PC-9 (cell line): ENCODE measurements at regions of chr19 and their contacts with region 1.

Region 1: DNA sequence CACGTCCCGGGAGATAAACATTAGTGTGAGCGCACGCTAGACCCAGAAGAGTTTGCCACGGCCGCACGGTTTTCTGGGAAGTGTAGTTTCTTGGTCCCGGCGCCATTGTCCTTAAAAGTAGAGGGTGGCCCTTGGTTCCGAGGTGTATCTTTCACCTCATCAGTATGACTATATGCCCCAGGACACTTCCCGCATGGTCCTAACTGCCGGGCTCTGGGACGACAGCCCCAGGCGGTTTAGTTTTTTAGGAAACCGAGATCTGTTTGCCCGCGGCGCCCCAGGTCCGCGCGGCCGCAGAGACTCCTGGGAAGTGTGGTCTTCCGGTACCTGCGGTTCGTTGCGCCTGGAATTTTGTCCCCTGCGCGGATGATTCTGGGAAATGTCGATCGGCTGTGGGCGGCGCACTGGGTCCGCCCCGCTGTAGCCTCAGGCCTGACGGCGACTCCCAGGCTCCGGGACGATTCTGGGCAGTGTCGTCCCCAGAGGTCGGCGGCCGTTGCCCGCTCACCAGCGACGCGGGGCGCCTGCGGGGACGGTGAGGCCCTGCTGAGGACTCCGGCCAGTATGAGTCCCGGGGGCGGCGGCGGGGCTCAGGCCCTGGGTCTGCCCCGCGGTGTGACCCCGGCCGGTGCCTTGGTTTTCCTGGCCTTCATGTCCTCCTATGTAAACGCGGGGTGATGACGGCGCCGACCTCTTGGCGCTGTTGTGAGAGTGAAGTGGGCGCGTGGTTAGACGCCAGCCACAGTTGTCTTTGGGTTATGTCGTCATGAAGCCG is at the start of gene ZNF181:
- DNase-seq: peak; percentile 80 to 88
- H3K4me3 ChIP-seq: peak within 1 kb of the TSS; percentile 93
- H3K27ac ChIP-seq: peak within 1 kb of the TSS; percentile 77
- H3K4me1 ChIP-seq: peaks cover 8% of the 10 kb centered on the region
- H3K27me3 ChIP-seq: no peaks in the 10 kb centered on the region
- CTCF ChIP-seq: no peak
- total RNA-seq, gene ZNF181: 2.6 and 4.7 TPM in 2 replicates

Region 2: DNA sequence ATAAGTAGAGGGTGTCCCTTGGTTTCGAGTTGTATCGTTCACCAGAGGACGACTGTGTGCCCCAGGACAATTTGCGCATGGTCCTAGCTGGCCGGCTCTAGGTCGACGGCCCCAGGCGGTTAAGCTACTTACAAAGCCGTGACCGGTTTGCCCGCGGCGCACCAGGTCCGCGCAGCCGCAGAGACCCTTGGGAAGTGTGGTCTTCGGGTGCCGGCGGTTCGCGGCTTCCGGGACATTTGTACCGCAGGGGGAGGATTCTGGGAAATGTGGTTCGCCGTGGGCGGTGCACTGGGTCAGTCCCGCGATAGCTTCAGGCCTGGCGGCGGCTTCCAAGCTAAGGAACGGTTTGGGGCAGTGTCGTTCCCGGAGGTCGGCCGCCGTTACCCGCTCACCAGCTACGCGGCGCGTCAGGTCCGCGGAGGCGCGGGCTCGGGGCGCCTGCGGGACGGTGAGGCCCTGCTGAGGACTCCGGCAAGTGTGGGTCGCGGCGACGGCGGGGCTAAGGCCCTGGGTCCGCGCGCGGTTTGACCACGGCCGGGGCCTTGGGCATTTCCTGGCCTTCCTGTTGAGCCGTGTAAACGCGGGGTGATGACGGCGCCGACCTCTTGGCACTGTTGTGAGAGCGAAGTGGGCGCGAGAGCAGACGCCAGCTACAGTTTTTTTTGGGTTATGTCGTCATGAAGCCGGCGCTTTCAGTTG is 56.5 kb before region 1 on chr19 and contains the start of gene ZNF302:
- CTCF ChIA-PET with region 1: no interaction called
- POLR2A ChIA-PET with region 1: interaction called, 3 read pairs
- intact Hi-C with region 1: loop called (anchors 1 kb)
- DNase-seq: peak; percentile 87 to 95
- H3K4me3 ChIP-seq: peak within 1 kb of the TSS; percentile 93
- H3K27ac ChIP-seq: peak within 1 kb of the TSS; percentile 80
- H3K4me1 ChIP-seq: peaks cover 16% of the 10 kb centered on the region
- H3K27me3 ChIP-seq: no peaks in the 10 kb centered on the region
- CTCF ChIP-seq: no peak
- total RNA-seq, gene ZNF302: 17.5 and 19.5 TPM in 2 replicates

Region 3: DNA sequence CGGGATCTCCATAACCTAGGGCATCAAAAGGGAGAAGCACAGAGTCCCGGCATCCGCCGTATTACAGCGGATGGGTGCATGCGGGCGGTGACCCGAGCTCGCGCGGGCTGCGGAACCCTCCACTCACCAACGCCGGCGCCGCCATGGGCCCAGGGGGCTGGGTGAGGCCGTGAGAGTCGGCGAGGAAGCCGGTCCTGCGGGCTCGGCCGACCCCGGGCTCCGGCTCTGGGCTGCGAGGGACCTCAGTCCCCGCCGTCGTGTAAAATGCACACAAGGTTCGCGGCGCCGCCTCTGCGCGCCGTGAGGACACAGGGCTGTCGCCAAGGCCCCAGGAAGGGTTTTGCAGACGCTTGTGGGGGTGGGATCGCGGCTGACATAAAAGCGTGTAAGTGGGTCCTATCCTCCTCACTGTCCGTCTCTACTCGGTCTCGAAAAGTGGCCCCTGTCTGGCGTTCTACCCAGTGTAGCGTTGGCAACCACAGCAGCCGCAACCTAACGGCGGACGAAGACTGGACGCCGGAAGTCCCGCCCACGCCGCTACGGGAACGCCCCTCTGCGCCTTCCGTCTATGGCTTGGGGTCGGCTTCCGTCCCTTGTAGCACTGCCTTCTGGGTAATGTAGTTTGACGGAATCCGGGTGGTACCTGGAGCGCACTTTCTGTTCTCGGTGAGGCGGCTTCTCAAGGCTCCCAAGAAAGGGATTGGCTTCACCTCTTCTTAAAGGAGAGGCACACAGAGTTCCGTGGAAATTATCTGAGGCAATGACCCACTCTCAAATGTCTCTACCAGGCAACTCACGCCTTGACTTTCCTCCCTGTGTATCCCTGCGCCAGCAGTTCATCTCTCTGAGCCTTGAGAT is 38.9 kb after region 1 on chr19 and contains the start of gene ZNF599:
- CTCF ChIA-PET with region 1: no interaction called
- POLR2A ChIA-PET with region 1: no interaction called
- intact Hi-C with region 1: loop called (anchors 1 kb)
- DNase-seq: peak; percentile 71 to 84
- H3K4me3 ChIP-seq: peak within 1 kb of the TSS; percentile 75
- H3K27ac ChIP-seq: no peak within 1 kb of the TSS
- H3K4me1 ChIP-seq: no peaks in the 10 kb centered on the region
- H3K27me3 ChIP-seq: no peaks in the 10 kb centered on the region
- CTCF ChIP-seq: no peak
- total RNA-seq, gene ZNF599: 9.2 and 12.4 TPM in 2 replicates

Region 4: GRCh38 chr19:34938886-34939285 is 204.9 kb after region 1 on chr19:
- CTCF ChIA-PET with region 1: no interaction called
- POLR2A ChIA-PET with region 1: no interaction called
- intact Hi-C with region 1: no loop called
- DNase-seq: no peak
- H3K4me3 ChIP-seq: no peak overlapping the region
- H3K27ac ChIP-seq: no peak overlapping the region
- H3K4me1 ChIP-seq: no peaks in the 10 kb centered on the region
- H3K27me3 ChIP-seq: no peaks in the 10 kb centered on the region
- CTCF ChIP-seq: no peak